ENCODE measurements at regions of chr7 and their contacts with region 1.

Region 1: GRCh38 chr7:36152756-36153570 is at the start of gene EEPD1:
- DNase-seq: peak; percentile 100
- H3K4me3 ChIP-seq: peak within 1 kb of the TSS; percentile 90
- H3K27ac ChIP-seq: peak within 1 kb of the TSS; percentile 62 to 77
- H3K4me1 ChIP-seq: peaks cover 23% of the 10 kb centered on the region
- H3K27me3 ChIP-seq: no peaks in the 10 kb centered on the region
- CTCF ChIP-seq: no peak
- EP300 ChIP-seq: no peak
- POLR2A ChIP-seq: peak; percentile 46
- total RNA-seq, gene EEPD1: 5.6 to 15.8 (median 10.7) TPM

Region 2: DNA sequence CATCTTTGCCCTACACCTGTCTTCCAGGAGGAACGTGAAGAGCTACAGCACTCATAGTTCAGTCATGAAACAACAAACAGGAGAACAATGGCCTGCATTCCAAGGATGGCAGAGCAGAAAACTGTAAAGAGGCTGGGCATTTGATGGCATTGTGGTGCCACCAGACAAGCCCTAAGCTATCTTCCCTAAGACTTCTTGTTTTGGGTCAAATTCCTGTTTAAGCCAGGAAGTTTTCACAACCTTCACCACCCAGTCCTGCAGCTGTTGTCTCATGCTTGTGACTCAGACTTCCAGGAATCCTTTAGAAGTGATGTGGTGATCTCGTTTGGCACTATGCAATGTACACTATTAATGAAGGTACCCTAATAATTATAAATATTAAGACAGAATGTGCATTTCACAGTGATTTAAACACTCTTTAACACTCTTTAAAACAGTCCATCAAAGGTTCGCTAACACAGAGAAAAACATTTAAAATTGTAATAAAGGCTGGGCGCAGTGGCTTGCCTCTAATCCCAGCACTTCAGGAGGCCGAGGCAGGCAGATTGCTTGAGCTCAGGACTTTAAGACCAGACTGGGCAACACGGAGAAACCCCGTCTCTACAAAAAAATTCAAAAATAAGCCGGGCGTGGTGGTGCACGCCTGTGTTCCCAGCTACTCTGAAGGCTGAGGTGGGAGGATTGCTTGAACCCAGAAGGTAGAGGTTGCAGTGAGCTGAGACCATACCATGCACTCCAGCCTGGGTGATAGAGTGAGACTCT is 455.4 kb before region 1 on chr7:
- intact Hi-C with region 1: no loop called
- DNase-seq: no peak
- H3K4me3 ChIP-seq: no peak overlapping the region
- H3K27ac ChIP-seq: no peak overlapping the region
- H3K4me1 ChIP-seq: peaks cover 8% of the 10 kb centered on the region
- H3K27me3 ChIP-seq: no peaks in the 10 kb centered on the region
- CTCF ChIP-seq: no peak
- EP300 ChIP-seq: no peak
- POLR2A ChIP-seq: no peak

Region 3: GRCh38 chr7:35781200-35781701 is 371.7 kb before region 1 on chr7:
- intact Hi-C with region 1: no loop called
- DNase-seq: no peak
- H3K4me3 ChIP-seq: no peak overlapping the region
- H3K27ac ChIP-seq: no peak overlapping the region
- H3K4me1 ChIP-seq: no peaks in the 10 kb centered on the region
- H3K27me3 ChIP-seq: no peaks in the 10 kb centered on the region
- CTCF ChIP-seq: no peak
- EP300 ChIP-seq: no peak
- POLR2A ChIP-seq: no peak

Region 4: GRCh38 chr7:36280840-36281812 is 128.2 kb after region 1 on chr7:
- intact Hi-C with region 1: loop called in 2 of 4 experiments (anchors 5 to 10 kb)
- DNase-seq: peak; percentile 65 to 78 (median 73)
- H3K4me3 ChIP-seq: no peak overlapping the region
- H3K27ac ChIP-seq: peak overlapping the region in 1 of 2 donors; percentile 66
- H3K4me1 ChIP-seq: peaks cover 34% of the 10 kb centered on the region
- H3K27me3 ChIP-seq: no peaks in the 10 kb centered on the region
- CTCF ChIP-seq: peak in 1 of 3 donors; percentile 21
- EP300 ChIP-seq: no peak
- POLR2A ChIP-seq: no peak

Measured in ovary (tissue), 10 donors.